Esophagus squamous epithelium (tissue), 5 donors: ENCODE measurements at regions of chr4 and their contacts with region 1.

Region 1: DNA sequence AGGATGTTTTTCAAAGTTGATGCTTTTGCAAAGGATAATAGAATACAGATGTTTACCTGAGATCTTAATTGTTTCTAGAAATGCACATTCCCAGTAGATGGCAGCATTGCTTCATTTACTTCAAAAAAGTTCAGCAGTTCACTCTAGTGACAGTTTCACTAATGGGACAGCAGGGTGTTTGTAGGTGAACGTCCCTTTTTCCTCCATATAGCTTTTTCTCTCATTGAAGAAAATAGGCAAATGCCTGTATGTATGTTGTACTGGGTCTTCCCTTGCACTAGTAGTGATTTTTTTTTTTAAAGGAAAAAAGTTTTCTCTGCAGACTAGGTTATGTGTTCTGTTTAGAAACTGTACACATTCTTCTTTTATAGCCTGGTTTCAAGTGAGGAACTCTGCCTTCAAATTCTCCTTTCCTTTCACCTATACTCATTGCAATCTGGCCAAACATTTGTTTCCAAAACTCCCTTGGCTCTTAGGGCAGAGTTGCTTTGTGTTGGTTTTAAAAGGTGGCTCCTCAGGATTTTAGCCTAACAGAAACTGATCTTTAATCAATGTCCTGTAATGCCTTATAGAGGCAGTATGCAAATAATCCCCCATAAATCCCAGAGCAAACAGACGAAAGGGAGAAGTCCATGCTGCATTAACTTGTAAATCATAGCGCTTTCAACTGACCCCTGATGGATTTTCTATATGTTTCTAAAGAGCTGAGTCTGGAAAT is 86.3 kb downstream of the EGF start:
- DNase-seq: no peak
- H3K4me3 ChIP-seq: no peak overlapping the region
- H3K27ac ChIP-seq: no peak overlapping the region
- H3K4me1 ChIP-seq: peaks cover 3 to 29% (median 9%) of the 10 kb centered on the region in 3 donors
- H3K27me3 ChIP-seq: no peaks in the 10 kb centered on the region
- CTCF ChIP-seq: peak; percentile 51 to 78 (median 62)
- POLR2A ChIP-seq: no peak

Region 2: GRCh38 chr4:110514889-110515479 is 516.0 kb after region 1 on chr4:
- intact Hi-C with region 1: loop called (anchors 2 kb)
- DNase-seq: no peak
- H3K4me3 ChIP-seq: no peak overlapping the region
- H3K27ac ChIP-seq: no peak overlapping the region
- H3K4me1 ChIP-seq: peaks cover 0 to 8% (median 0%) of the 10 kb centered on the region in 3 donors
- H3K27me3 ChIP-seq: no peaks in the 10 kb centered on the region
- CTCF ChIP-seq: peak; percentile 42 to 72 (median 66)
- POLR2A ChIP-seq: no peak